OCI-LY7 (cell line): ENCODE measurements at regions of chrX and their contacts with region 1.

Region 1: GRCh38 chrX:20237864-20238263 is 28.8 kb downstream of the RPS6KA3 start:
- DNase-seq: no peak
- H3K4me3 ChIP-seq: no peak overlapping the region
- H3K27ac ChIP-seq: no peak overlapping the region
- H3K4me1 ChIP-seq: no peaks in the 10 kb centered on the region
- CTCF ChIP-seq: no peak

Region 2: DNA sequence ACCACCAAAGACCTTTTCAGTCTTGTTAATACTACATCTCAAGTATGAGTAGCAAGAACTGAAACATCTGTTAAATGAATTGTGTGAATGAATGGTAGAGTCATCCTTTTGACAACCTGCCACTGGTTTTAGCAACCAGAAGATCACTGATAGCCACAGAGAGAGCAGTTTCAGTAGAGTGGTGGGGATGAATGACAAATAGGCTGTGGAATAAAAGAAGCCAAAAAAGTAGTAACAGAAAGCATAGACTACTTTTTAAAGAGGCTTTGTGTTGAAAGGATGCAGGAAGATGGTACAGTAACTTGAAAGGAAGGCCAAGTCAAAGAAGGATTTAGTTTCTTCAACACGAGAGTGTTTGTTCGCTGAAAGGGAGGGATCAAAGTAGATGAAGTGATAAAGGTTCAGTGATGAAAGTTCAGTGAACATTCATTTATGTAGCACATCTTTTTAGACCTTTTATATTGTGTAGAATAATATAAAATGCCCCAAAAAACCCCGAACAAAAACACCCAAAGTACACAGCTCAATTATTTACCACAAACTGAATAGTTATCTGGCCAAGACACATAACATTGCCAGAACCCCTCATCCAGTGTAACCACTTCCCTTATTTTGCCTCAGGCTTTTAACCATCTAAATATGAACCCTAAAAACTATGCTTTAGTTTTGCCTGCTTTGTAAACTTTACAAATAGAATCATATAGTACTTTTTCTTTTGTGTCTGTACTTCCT is 56.1 kb before region 1 on chrX:
- CTCF ChIA-PET with region 1: no interaction called
- POLR2A ChIA-PET with region 1: interaction called, 10 read pairs
- intact Hi-C with region 1: no loop called
- DNase-seq: no peak
- H3K4me3 ChIP-seq: no peak overlapping the region
- H3K27ac ChIP-seq: no peak overlapping the region
- H3K4me1 ChIP-seq: no peaks in the 10 kb centered on the region
- CTCF ChIP-seq: no peak